ENCODE measurements at regions of chr9 and their contacts with region 1.

Region 1: DNA sequence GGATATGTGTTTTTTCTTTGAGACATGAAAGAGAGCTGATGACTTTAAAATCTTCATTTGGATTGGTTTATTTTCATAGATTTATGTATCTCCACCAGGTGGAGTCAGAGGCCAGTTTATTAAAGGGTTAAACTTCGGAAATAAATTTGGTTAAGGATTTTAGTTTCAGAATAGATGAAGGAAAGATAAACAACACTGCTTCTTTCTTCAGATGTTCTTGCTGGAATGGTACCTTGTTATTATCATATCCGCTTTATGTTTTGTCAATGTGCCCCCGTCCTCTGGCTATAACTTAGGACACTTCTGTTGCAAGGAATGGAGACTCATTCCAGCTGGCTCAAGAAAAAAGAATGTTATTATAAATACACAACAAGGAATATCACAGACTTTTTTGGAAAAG is 81.2 kb downstream of the ALDH1A1 start:
- DNase-seq: no peak
- H3K4me3 ChIP-seq: no peak overlapping the region
- H3K27ac ChIP-seq: peak overlapping the region; percentile 23 to 80 (median 77)
- H3K4me1 ChIP-seq: peaks cover 20 to 21% of the 10 kb centered on the region in 2 donors
- H3K27me3 ChIP-seq: no peaks in the 10 kb centered on the region
- CTCF ChIP-seq: peak in 3 of 6 experiments; percentile 46 to 67 (median 63)
- POLR2A ChIP-seq: no peak

Region 2: DNA sequence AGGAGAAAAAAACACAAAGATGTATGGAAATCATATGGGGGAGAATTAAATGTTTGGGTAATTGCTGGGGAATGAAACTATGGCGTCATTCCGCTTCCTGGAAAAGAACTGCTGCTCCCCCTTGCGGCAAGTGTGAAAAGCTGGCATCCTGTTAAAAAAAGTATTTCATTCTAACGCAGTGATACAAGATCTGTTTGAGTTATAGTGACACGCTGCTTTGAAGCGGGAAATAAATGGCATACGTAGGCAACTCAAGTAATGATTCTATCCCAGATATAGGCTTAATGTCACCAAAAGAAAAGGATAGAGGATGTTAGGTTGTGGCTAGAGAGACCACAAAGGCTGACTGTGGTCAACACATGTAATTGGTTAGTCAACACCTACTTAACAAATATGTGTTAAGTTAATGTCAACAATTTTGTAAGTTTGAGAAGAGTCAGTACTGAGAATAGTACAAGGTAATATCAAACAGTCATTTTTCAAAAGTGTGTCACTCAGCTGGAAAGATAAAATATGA is 151.4 kb after region 1 on chr9:
- intact Hi-C with region 1: loop called (anchors 5 kb)
- DNase-seq: peak; percentile 35 to 65
- H3K4me3 ChIP-seq: no peak overlapping the region
- H3K27ac ChIP-seq: no peak overlapping the region
- H3K4me1 ChIP-seq: peaks cover 0 to 6% of the 10 kb centered on the region in 2 donors
- H3K27me3 ChIP-seq: no peaks in the 10 kb centered on the region
- CTCF ChIP-seq: peak; percentile 72 to 95 (median 80)
- POLR2A ChIP-seq: no peak